AG04450 (cell line): ENCODE measurements at regions of chr6 and their contacts with region 1.

Region 1: GRCh38 chr6:33276864-33277662 is at the start of gene B3GALT4:
- DNase-seq: no peak
- H3K4me3 ChIP-seq: peak within 1 kb of the TSS; percentile 50
- H3K27ac ChIP-seq: peak within 1 kb of the TSS; percentile 68
- H3K27me3 ChIP-seq: no peaks in the 10 kb centered on the region
- CTCF ChIP-seq: peak; percentile 45
- polyA plus RNA-seq, gene B3GALT4: 1.1 and 1.4 TPM in 2 replicates

Region 2: GRCh38 chr6:33200219-33201146 is 76.6 kb before region 1 on chr6 and contains the starts of genes RXRB and SLC39A7:
- CTCF ChIA-PET with region 1: no interaction called
- POLR2A ChIA-PET with region 1: no interaction called
- DNase-seq: peak; percentile 98
- H3K4me3 ChIP-seq: peak within 1 kb of the TSS; percentile 95
- H3K27ac ChIP-seq: peak within 1 kb of the TSS; percentile 94
- H3K27me3 ChIP-seq: no peaks in the 10 kb centered on the region
- CTCF ChIP-seq: no peak
- polyA plus RNA-seq, gene RXRB: 38.5 and 44.1 TPM in 2 replicates
- polyA plus RNA-seq, gene SLC39A7: 129 and 150 TPM in 2 replicates

Region 3: DNA sequence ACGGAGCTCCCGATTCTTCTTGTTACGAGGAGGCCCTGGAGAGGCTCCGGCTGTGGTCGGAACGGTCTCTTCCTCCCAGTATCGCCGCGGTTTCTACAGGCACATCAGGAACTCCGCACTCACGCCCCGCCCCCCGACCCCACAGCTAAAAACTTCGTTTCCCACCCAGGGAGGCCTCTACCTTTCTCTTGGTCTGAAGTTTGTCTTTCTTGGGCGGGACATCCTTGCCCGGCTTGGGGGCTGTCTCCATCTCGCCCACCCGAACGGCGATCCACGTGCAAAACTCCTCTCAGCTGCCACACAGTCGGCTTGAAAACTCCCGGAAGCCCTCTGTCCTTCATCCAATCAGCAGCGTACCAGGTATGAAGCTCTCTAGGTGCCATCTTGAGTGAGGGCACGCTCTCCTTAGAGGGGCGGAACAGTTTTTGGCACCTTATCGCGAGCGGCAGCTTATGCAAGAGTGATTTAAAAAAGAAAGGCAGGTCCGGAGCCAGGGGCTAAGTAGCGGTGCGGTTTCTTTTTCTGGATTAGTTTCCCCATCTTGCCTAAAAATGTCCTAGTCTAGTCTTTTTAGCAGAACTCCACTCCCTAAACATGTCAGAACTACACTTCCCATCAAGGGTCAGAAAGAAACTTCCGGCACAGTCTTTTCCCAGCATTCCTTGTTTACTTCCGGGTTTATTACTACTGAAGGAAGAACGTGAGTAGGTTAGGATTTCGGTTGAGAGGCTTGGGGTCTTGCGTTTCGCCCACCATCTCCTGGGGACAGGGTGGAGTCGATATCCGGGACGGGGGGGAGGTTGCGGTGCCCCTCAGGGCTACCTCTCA is 12.1 kb after region 1 on chr6 and contains the starts of genes PFDN6 and WDR46:
- CTCF ChIA-PET with region 1: interaction called, 11 read pairs
- POLR2A ChIA-PET with region 1: interaction called, 18 read pairs
- DNase-seq: peak; percentile 60
- H3K4me3 ChIP-seq: peak within 1 kb of the TSS; percentile 89
- H3K27ac ChIP-seq: peak within 1 kb of the TSS; percentile 39
- H3K27me3 ChIP-seq: no peaks in the 10 kb centered on the region
- CTCF ChIP-seq: no peak
- polyA plus RNA-seq, gene PFDN6: 59.6 and 64.6 TPM in 2 replicates
- polyA plus RNA-seq, gene WDR46: 43.3 and 44.7 TPM in 2 replicates